CD8-positive, alpha-beta memory T cell (primary cell): ENCODE measurements at regions of chr1 and their contacts with region 1.

Region 1: GRCh38 chr1:28971980-28972771 is 57.8 kb downstream of the EPB41 start:
- DNase-seq: no peak
- H3K4me3 ChIP-seq: no peak overlapping the region
- H3K4me3 Mint-ChIP-seq: peak overlapping the region in 6 of 7 donors; percentile 24 to 70 (median 40)
- H3K27ac ChIP-seq: no peak overlapping the region
- H3K27ac Mint-ChIP-seq: peak overlapping the region in 4 of 8 donors; percentile 58 to 83 (median 65)
- H3K4me1 ChIP-seq: peaks cover 30% of the 10 kb centered on the region
- H3K4me1 Mint-ChIP-seq: peaks cover 62 to 78% (median 68%) of the 10 kb centered on the region in 3 donors
- H3K27me3 ChIP-seq: no peaks in the 10 kb centered on the region
- H3K27me3 Mint-ChIP-seq: no peaks in the 10 kb centered on the region

Region 2: DNA sequence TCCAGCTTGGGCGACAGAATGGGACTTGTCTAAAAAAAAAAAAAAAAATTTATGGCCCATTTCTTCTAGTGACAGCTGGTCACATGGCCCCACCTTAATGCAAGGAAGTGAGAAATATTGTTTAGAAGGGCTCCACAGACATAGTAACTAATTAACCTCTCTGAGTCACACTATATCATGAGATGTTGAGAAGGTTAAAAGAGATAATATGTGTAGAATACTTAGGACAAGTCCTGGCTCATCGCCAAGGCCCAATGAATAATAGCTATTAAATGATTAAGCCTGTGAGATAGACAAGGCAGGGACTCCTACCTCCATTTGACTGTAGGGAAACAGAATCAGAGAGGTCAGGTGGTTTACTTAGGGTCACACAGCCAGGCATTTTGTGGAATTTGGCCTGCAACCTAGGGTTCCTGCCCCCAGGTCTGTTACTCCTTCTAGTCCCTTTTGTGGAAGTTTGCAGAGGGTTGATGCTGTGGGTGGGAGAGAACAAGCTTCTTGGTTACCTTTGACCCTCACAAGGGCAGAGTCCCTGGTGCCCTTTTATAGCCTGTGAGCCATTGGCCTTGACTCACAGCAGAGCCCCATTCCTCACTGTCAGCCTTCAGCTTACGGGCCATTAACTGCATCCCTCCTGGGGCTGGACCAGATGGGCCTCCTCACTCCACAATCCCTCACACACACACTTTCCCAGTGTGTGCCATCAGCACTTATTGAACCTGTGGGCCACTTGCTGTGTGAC is 111.7 kb before region 1 on chr1:
- CTCF ChIA-PET with region 1: no interaction called
- POLR2A ChIA-PET with region 1: no interaction called
- DNase-seq: no peak
- H3K4me3 ChIP-seq: no peak overlapping the region
- H3K4me3 Mint-ChIP-seq: no peak overlapping the region
- H3K27ac ChIP-seq: no peak overlapping the region
- H3K27ac Mint-ChIP-seq: no peak overlapping the region
- H3K4me1 ChIP-seq: no peaks in the 10 kb centered on the region
- H3K4me1 Mint-ChIP-seq: no peaks in the 10 kb centered on the region
- H3K27me3 ChIP-seq: no peaks in the 10 kb centered on the region
- H3K27me3 Mint-ChIP-seq: peaks cover 2 to 9% of the 10 kb centered on the region in 2 donors

Region 3: GRCh38 chr1:28983509-28984310 is 11.5 kb after region 1 on chr1:
- CTCF ChIA-PET with region 1: no interaction called
- POLR2A ChIA-PET with region 1: no interaction called
- DNase-seq: peak in 2 of 5 donors; percentile 2 to 10
- H3K4me3 ChIP-seq: no peak overlapping the region
- H3K4me3 Mint-ChIP-seq: peak overlapping the region in 2 of 7 donors; percentile 36 to 46
- H3K27ac ChIP-seq: no peak overlapping the region
- H3K27ac Mint-ChIP-seq: peak overlapping the region in 3 of 8 donors; percentile 39 to 88 (median 50)
- H3K4me1 ChIP-seq: peaks cover 17% of the 10 kb centered on the region
- H3K4me1 Mint-ChIP-seq: peaks cover 59 to 81% (median 81%) of the 10 kb centered on the region in 3 donors
- H3K27me3 ChIP-seq: no peaks in the 10 kb centered on the region
- H3K27me3 Mint-ChIP-seq: no peaks in the 10 kb centered on the region

Region 4: GRCh38 chr1:29033829-29034466 is 61.8 kb after region 1 on chr1:
- CTCF ChIA-PET with region 1: no interaction called
- POLR2A ChIA-PET with region 1: no interaction called
- DNase-seq: peak in 2 of 5 donors; percentile 16 to 26
- H3K4me3 ChIP-seq: no peak overlapping the region
- H3K4me3 Mint-ChIP-seq: no peak overlapping the region
- H3K27ac ChIP-seq: no peak overlapping the region
- H3K27ac Mint-ChIP-seq: peak overlapping the region in 3 of 8 donors; percentile 18 to 51 (median 28)
- H3K4me1 ChIP-seq: no peaks in the 10 kb centered on the region
- H3K4me1 Mint-ChIP-seq: peaks cover 0 to 4% (median 3%) of the 10 kb centered on the region in 3 donors
- H3K27me3 ChIP-seq: no peaks in the 10 kb centered on the region
- H3K27me3 Mint-ChIP-seq: no peaks in the 10 kb centered on the region

Region 5: GRCh38 chr1:29044010-29044409 is 71.8 kb after region 1 on chr1:
- CTCF ChIA-PET with region 1: no interaction called
- POLR2A ChIA-PET with region 1: no interaction called
- DNase-seq: no peak
- H3K4me3 ChIP-seq: no peak overlapping the region
- H3K4me3 Mint-ChIP-seq: no peak overlapping the region
- H3K27ac ChIP-seq: no peak overlapping the region
- H3K27ac Mint-ChIP-seq: peak overlapping the region in 2 of 8 donors; percentile 19 to 59
- H3K4me1 ChIP-seq: no peaks in the 10 kb centered on the region
- H3K4me1 Mint-ChIP-seq: peaks cover 0 to 5% (median 2%) of the 10 kb centered on the region in 3 donors
- H3K27me3 ChIP-seq: no peaks in the 10 kb centered on the region
- H3K27me3 Mint-ChIP-seq: no peaks in the 10 kb centered on the region

Region 6: GRCh38 chr1:29169976-29170375 is 197.8 kb after region 1 on chr1:
- CTCF ChIA-PET with region 1: no interaction called
- POLR2A ChIA-PET with region 1: interaction called, 11 read pairs
- DNase-seq: no peak
- H3K4me3 ChIP-seq: no peak overlapping the region
- H3K4me3 Mint-ChIP-seq: peak overlapping the region in 6 of 7 donors; percentile 0 to 63 (median 38)
- H3K27ac ChIP-seq: no peak overlapping the region
- H3K27ac Mint-ChIP-seq: peak overlapping the region in 6 of 8 donors; percentile 1 to 74 (median 22)
- H3K4me1 ChIP-seq: peaks cover 37% of the 10 kb centered on the region
- H3K4me1 Mint-ChIP-seq: peaks cover 69 to 80% (median 76%) of the 10 kb centered on the region in 3 donors
- H3K27me3 ChIP-seq: no peaks in the 10 kb centered on the region
- H3K27me3 Mint-ChIP-seq: no peaks in the 10 kb centered on the region